ENCODE measurements at regions of chr1 and their contacts with region 1.

Region 1: GRCh38 chr1:62407405-62408009 is 29.3 kb upstream of the USP1 start:
- DNase-seq: peak in 6 of 35 experiments; percentile 3 to 73 (median 16)
- ATAC-seq: peak in 1 of 4 experiments; percentile 42
- H3K4me3 ChIP-seq: no peak overlapping the region
- H3K4me3 Mint-ChIP-seq: no peak overlapping the region
- H3K27ac ChIP-seq: no peak overlapping the region
- H3K27ac Mint-ChIP-seq: no peak overlapping the region
- H3K4me1 ChIP-seq: no peaks in the 10 kb centered on the region
- H3K4me1 Mint-ChIP-seq: no peaks in the 10 kb centered on the region
- H3K27me3 ChIP-seq: peaks cover 0 to 9% of the 10 kb centered on the region in 2 experiments
- H3K27me3 Mint-ChIP-seq: no peaks in the 10 kb centered on the region

Region 2: GRCh38 chr1:62230709-62231108 is 176.8 kb before region 1 on chr1:
- CTCF ChIA-PET with region 1: interaction called in 1 of 2 experiments, 11 read pairs
- POLR2A ChIA-PET with region 1: no interaction called
- DNase-seq: no peak
- ATAC-seq: no peak
- H3K4me3 ChIP-seq: no peak overlapping the region
- H3K4me3 Mint-ChIP-seq: no peak overlapping the region
- H3K27ac ChIP-seq: no peak overlapping the region
- H3K27ac Mint-ChIP-seq: no peak overlapping the region
- H3K4me1 ChIP-seq: no peaks in the 10 kb centered on the region
- H3K4me1 Mint-ChIP-seq: no peaks in the 10 kb centered on the region
- H3K27me3 ChIP-seq: peaks cover 0 to 26% of the 10 kb centered on the region in 2 experiments
- H3K27me3 Mint-ChIP-seq: peaks cover 0 to 10% of the 10 kb centered on the region in 2 donors